AG04449 (cell line): ENCODE measurements at regions of chr1 and their contacts with region 1.

Region 1: GRCh38 chr1:43763497-43763973 is 56.2 kb downstream of the ST3GAL3 start:
- DNase-seq: peak; percentile 73
- H3K4me3 ChIP-seq: no peak overlapping the region
- CTCF ChIP-seq: peak; percentile 79

Region 2: DNA sequence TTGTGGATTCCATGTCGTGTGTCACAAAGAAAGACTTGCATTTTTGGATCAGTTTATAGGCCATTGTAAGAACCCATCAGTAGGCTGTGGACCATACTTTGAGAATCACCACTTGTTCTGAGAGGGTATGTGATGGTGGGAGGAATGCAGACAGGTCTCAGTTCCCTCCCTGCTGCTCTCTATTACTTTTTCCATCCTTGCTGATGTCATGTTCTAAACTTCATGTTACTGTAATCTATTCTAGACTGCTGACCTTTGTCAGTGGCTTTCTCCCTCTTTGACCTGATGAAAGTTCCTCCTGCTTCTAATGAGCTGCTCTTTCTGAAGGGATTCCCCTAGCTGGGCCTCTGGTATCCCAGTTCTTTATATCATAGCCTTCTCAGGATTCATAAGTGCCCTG is 10.1 kb before region 1 on chr1:
- CTCF ChIA-PET with region 1: interaction called, 22 read pairs
- POLR2A ChIA-PET with region 1: no interaction called
- DNase-seq: no peak
- H3K4me3 ChIP-seq: no peak overlapping the region
- CTCF ChIP-seq: no peak

Region 3: GRCh38 chr1:43824795-43825194 is 61.3 kb after region 1 on chr1:
- CTCF ChIA-PET with region 1: interaction called, 10 read pairs
- POLR2A ChIA-PET with region 1: no interaction called
- DNase-seq: no peak
- H3K4me3 ChIP-seq: no peak overlapping the region
- CTCF ChIP-seq: no peak

Region 4: GRCh38 chr1:43924516-43924915 is 161.0 kb after region 1 on chr1:
- CTCF ChIA-PET with region 1: interaction called, 1,004 read pairs
- POLR2A ChIA-PET with region 1: no interaction called
- DNase-seq: no peak
- H3K4me3 ChIP-seq: no peak overlapping the region
- CTCF ChIP-seq: no peak

Region 5: GRCh38 chr1:43974443-43975248 is 211.1 kb after region 1 on chr1 and contains the start of gene ATP6V0B:
- CTCF ChIA-PET with region 1: interaction called, 71 read pairs
- POLR2A ChIA-PET with region 1: interaction called, 3 read pairs
- DNase-seq: peak; percentile 28
- H3K4me3 ChIP-seq: peak within 1 kb of the TSS; percentile 85
- CTCF ChIP-seq: peak; percentile 36

Region 6: DNA sequence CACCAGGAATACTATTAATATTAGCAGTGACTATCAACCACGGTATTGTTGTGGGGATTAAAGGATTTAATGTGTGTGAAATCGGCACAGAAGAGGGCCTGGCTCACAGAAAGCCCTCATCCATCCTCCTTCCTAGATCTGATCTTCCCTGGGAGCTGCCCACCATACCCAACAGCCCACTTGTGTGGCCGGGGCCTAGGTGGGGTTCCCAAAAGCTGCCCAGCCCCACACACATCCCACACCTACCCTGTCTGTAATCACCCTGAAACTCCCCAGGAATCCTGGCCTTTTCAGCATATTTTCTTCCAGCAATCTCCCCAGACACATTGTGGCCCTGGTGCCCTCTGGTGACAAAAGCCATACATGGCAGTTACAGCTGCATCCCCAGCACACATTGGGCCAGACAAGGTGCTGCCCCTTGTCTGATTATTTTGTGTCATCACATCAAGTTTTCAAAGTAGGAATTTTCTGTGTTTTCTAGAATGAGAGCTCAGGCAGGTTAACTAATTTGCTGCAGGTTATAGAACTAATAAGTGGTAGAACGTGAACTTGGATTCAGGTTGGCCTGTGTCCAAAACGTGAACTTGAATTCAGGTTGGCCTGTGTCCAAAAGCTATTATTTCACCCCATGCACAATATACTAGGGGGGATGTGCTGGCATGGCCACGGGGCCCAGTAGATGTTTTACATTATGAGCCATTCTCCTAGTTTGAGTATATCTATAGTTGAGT is 273.0 kb after region 1 on chr1:
- CTCF ChIA-PET with region 1: interaction called, 30 read pairs
- POLR2A ChIA-PET with region 1: no interaction called
- DNase-seq: no peak
- H3K4me3 ChIP-seq: no peak overlapping the region
- CTCF ChIP-seq: peak; percentile 78